Uterus (tissue), 4 donors: ENCODE measurements at regions of chr7 and their contacts with region 1.

Region 1: DNA sequence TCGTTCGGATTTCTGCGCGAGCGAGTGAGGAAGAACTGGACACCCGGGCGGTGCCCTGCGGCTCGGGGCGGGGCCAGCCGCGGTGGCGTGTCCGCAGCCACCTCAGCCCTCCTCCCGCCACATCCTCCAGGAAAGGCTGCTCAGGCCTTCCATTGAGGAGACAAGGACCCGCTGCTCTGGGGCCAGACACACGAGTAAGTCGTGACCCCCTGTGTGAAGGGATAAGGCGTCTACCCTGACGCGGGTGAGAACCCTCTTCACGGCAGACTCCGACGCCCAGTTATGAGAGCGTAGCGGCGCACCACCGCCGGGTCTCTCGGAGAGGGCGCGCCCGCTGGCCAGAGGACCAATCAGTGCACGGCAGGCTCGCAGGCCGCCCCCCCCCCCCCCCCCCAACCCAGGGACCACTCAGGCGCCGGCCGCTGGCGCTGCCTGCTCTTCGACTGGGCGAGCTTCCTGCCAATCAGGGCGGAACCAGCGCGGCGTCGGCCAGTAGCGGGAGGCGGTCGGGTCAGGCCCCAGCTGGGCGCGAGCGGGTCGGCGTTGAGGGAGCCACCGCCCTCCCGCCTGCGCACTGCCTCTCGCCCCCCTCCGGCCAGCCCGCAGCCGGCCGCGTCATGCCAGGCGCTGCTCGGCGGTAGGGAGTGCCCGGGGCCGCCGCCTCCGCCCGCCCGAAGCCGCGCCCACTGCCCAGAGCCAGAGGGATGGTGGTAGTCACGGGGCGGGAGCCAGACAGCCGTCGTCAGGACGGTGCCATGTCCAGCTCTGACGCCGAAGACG is at the start of gene KCTD7:
- DNase-seq: peak; percentile 98 to 99
- H3K4me3 ChIP-seq: peak within 1 kb of the TSS; percentile 79 to 94
- H3K27ac ChIP-seq: peak within 1 kb of the TSS; percentile 98 to 99
- H3K4me1 ChIP-seq: peaks cover 0 to 11% of the 10 kb centered on the region in 2 donors
- H3K27me3 ChIP-seq: no peaks in the 10 kb centered on the region
- CTCF ChIP-seq: peak in 2 of 4 experiments; percentile 4 to 34
- POLR2A ChIP-seq: peak; percentile 97 to 99
- total RNA-seq, gene KCTD7: 8.7 to 23.5 (median 17.8) TPM

Region 2: GRCh38 chr7:66557608-66558143 is 70.9 kb before region 1 on chr7:
- intact Hi-C with region 1: loop called (anchors 10 kb)
- DNase-seq: peak; percentile 67 to 76
- H3K4me3 ChIP-seq: no peak overlapping the region
- H3K27ac ChIP-seq: peak overlapping the region in 1 of 2 donors; percentile 10
- H3K4me1 ChIP-seq: no peaks in the 10 kb centered on the region
- H3K27me3 ChIP-seq: no peaks in the 10 kb centered on the region
- CTCF ChIP-seq: peak; percentile 89 to 99 (median 92)
- POLR2A ChIP-seq: no peak

Region 3: DNA sequence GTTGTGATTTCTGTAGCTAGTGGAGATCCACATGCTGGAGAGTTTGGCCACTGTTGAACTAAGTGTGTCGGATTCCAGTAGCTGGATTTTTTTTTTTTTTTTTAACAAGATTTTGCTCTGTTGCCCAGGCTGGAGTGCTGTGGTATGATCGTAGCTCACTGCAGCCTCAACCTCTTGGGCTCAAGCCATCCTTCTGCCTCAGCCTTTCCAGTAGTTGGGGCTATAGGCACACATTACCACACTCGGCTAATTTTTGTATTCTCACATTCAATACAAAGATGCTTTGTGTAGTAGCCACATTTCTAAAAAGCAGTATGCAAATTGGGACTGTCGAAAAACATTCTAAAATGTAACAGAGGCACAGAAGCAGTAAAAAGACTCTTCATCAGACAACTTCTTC is 175.4 kb after region 1 on chr7:
- intact Hi-C with region 1: no loop called
- DNase-seq: no peak
- H3K4me3 ChIP-seq: no peak overlapping the region
- H3K27ac ChIP-seq: no peak overlapping the region
- H3K4me1 ChIP-seq: no peaks in the 10 kb centered on the region
- H3K27me3 ChIP-seq: no peaks in the 10 kb centered on the region
- CTCF ChIP-seq: no peak
- POLR2A ChIP-seq: no peak